ENCODE measurements at regions of chr3 and their contacts with region 1.

Region 1: GRCh38 chr3:152444029-152444641 is 175.4 kb downstream of the MBNL1 start:
- DNase-seq: peak; percentile 73
- ATAC-seq: peak; percentile 50; the same call in 1 of the 2 replicates
- H3K4me3 ChIP-seq: no peak overlapping the region
- H3K27ac ChIP-seq: no peak overlapping the region
- H3K4me1 ChIP-seq: peaks cover 4% of the 10 kb centered on the region
- H3K27me3 ChIP-seq: no peaks in the 10 kb centered on the region
- CTCF ChIP-seq: peak; percentile 64
- POLR2A ChIP-seq: no peak
- RAD21 ChIP-seq: peak; percentile 70

Region 2: GRCh38 chr3:152026033-152026556 is 418.0 kb before region 1 on chr3:
- CTCF ChIA-PET with region 1: no interaction called
- POLR2A ChIA-PET with region 1: no interaction called
- dilution Hi-C with region 1: no loop called
- in situ Hi-C with region 1: no loop called
- intact Hi-C with region 1: loop called (anchors 2 kb)
- DNase-seq: peak; percentile 89
- ATAC-seq: peak; percentile 89
- H3K4me3 ChIP-seq: no peak overlapping the region
- H3K27ac ChIP-seq: peak overlapping the region; percentile 80; the same call in 1 of the 2 replicates
- H3K4me1 ChIP-seq: no peaks in the 10 kb centered on the region
- H3K27me3 ChIP-seq: no peaks in the 10 kb centered on the region
- CTCF ChIP-seq: peak; percentile 63
- POLR2A ChIP-seq: no peak
- RAD21 ChIP-seq: peak; percentile 62

Region 3: GRCh38 chr3:152302521-152303021 is 141.6 kb before region 1 on chr3:
- CTCF ChIA-PET with region 1: interaction called, 5 read pairs
- POLR2A ChIA-PET with region 1: no interaction called
- dilution Hi-C with region 1: no loop called
- in situ Hi-C with region 1: no loop called
- intact Hi-C with region 1: loop called (anchors 10 kb)
- DNase-seq: peak; percentile 90
- ATAC-seq: peak; percentile 38
- H3K4me3 ChIP-seq: no peak overlapping the region
- H3K27ac ChIP-seq: peak overlapping the region; percentile 36; the same call in 1 of the 2 replicates
- H3K4me1 ChIP-seq: peaks cover 18% of the 10 kb centered on the region
- H3K27me3 ChIP-seq: no peaks in the 10 kb centered on the region
- CTCF ChIP-seq: no peak
- POLR2A ChIP-seq: no peak
- RAD21 ChIP-seq: no peak

Measured in IMR-90 (cell line).